OCI-LY7 (cell line): ENCODE measurements at regions of chr13 and their contacts with region 1.

Region 1: GRCh38 chr13:30132623-30133553 is 174.5 kb downstream of the KATNAL1 start:
- DNase-seq: peak; percentile 93
- H3K4me3 ChIP-seq: no peak overlapping the region
- H3K27ac ChIP-seq: no peak overlapping the region
- H3K4me1 ChIP-seq: peaks cover 10% of the 10 kb centered on the region
- CTCF ChIP-seq: peak; percentile 94

Region 2: GRCh38 chr13:30306762-30307193 is 173.9 kb after region 1 on chr13:
- CTCF ChIA-PET with region 1: no interaction called
- POLR2A ChIA-PET with region 1: interaction called, 6 read pairs
- intact Hi-C with region 1: loop called (anchors 1 kb)
- DNase-seq: peak; percentile 98
- H3K4me3 ChIP-seq: peak overlapping the region; percentile 82
- H3K27ac ChIP-seq: peak overlapping the region; percentile 70
- H3K4me1 ChIP-seq: peaks cover 72% of the 10 kb centered on the region
- CTCF ChIP-seq: no peak

Region 3: GRCh38 chr13:30355384-30355699 is 222.5 kb after region 1 on chr13:
- CTCF ChIA-PET with region 1: no interaction called
- POLR2A ChIA-PET with region 1: interaction called, 3 read pairs
- intact Hi-C with region 1: loop called (anchors 5 kb)
- DNase-seq: peak; percentile 84
- H3K4me3 ChIP-seq: peak overlapping the region; percentile 42
- H3K27ac ChIP-seq: peak overlapping the region; percentile 83
- H3K4me1 ChIP-seq: peaks cover 50% of the 10 kb centered on the region
- CTCF ChIP-seq: peak; percentile 91

Region 4: GRCh38 chr13:30465585-30466357 is 332.9 kb after region 1 on chr13 and contains the start of gene HMGB1:
- CTCF ChIA-PET with region 1: interaction called, 3 read pairs
- POLR2A ChIA-PET with region 1: no interaction called
- intact Hi-C with region 1: loop called (anchors 5 kb)
- DNase-seq: peak; percentile 100
- H3K4me3 ChIP-seq: peak within 1 kb of the TSS; percentile 99
- H3K27ac ChIP-seq: peak within 1 kb of the TSS; percentile 93
- H3K4me1 ChIP-seq: peaks cover 44% of the 10 kb centered on the region
- CTCF ChIP-seq: no peak
- total RNA-seq, gene HMGB1: 1,288 and 1,675 TPM in 2 replicates

Region 5: DNA sequence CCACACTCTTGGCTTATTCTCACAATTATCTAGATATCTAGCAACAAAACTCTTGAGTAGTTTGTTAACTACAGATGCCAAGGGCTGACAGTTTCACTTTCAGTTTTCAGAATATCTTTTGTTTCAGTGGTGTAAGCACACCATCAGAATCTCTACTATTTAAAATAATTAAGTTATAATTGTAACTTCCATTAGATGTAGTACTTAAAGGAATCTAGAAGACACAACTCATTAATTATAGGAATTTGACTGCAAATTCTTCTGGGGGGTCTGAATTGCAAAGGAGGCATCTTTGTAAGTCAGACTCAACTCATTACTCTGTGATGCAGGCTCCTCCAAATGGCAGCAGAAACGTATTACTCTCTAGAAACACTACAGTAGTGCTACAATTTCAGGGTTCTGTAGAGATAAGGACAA is 440.0 kb after region 1 on chr13:
- CTCF ChIA-PET with region 1: no interaction called
- POLR2A ChIA-PET with region 1: interaction called, 3 read pairs
- intact Hi-C with region 1: loop called (anchors 1 kb)
- DNase-seq: peak; percentile 80
- H3K4me3 ChIP-seq: peak overlapping the region; percentile 60
- H3K27ac ChIP-seq: peak overlapping the region; percentile 46
- H3K4me1 ChIP-seq: peaks cover 29% of the 10 kb centered on the region
- CTCF ChIP-seq: peak; percentile 88